Activated CD4-positive, alpha-beta memory T cell treated with anti-CD3 and anti-CD28 coated beads for 36 hours (primary cell): ENCODE measurements at regions of chr14 and their contacts with region 1.

Region 1: GRCh38 chr14:30375296-30375892 is 183.6 kb upstream of the G2E3 start:
- DNase-seq: peak; percentile 78
- H3K4me3 Mint-ChIP-seq: no peak overlapping the region
- H3K27ac Mint-ChIP-seq: no peak overlapping the region
- H3K4me1 Mint-ChIP-seq: no peaks in the 10 kb centered on the region
- H3K27me3 Mint-ChIP-seq: peaks cover 6% of the 10 kb centered on the region

Region 2: DNA sequence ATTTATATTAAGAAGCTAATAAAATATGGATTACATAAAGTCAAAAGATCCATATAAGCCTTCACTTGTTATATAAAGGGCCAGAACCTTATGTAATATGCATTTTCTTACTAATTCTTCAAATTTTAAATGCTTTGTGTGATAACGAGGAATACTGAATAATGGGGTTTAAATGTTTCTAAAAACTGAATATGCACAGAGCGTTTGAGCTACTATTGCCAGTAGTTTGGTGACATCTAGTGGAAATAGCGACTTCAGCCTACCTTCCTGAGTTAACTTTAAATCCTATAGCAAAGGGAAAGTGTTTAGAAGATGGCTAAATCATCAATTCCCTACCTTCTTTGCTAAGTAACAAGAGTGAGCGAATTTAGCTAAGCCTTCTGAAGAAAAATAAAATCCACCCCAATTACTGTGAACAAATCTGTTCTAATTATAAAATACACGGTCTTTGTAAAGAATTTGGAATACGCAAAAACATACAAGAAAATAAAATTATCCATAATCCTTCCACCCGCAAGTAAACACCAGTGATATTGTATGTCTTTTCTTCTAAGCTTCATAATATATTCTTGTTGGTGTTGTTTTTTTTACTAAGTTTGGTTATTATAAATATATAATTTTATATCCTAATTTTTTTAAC is 68.1 kb after region 1 on chr14:
- CTCF ChIA-PET with region 1: interaction called, 6 read pairs
- POLR2A ChIA-PET with region 1: no interaction called
- intact Hi-C with region 1: loop called (anchors 10 kb)
- DNase-seq: no peak
- H3K4me3 Mint-ChIP-seq: no peak overlapping the region
- H3K27ac Mint-ChIP-seq: no peak overlapping the region
- H3K4me1 Mint-ChIP-seq: no peaks in the 10 kb centered on the region
- H3K27me3 Mint-ChIP-seq: peaks cover 1% of the 10 kb centered on the region